Esophagus muscularis mucosa (tissue), 4 donors: ENCODE measurements at regions of chr5 and their contacts with region 1.

Region 1: DNA sequence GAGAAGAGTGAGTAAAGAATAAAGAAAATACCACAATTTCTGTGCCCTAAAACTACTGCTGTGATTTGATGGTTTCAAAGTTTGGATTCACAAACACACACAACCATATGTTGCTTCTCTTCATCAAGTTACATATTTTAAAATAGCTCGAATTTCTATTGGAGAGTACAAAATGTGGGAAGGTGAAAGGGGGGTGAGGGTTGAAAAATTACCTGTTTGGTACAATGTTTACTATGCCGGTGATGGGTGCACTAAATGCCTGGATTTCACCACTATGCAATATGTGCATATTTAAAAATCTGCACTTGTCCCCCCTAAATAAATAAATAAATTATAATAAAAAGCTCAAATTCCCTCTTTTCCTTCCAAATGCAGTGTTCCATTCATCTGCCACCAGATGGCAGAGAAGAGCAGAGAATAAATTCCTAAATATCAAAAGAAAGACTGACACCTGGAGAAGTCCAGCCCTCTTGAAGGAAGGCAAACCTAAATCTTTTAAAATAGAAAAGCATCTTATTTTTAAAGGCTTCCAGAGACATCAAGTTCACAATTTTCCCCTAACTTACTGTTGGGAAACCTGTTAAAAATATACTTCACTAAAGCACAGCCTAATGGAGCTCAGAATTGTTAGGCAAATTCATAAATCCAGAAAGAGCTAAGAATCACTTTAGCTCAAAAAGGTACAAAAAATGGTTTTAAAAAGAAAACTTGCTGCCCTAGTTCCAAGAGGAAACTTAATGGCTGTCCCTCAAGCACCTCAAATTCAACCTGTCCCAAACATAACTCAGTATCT is 24.8 kb upstream of the HNRNPA0 start:
- DNase-seq: no peak
- H3K4me3 ChIP-seq: no peak overlapping the region
- H3K27ac ChIP-seq: no peak overlapping the region
- H3K4me1 ChIP-seq: no peaks in the 10 kb centered on the region
- H3K27me3 ChIP-seq: no peaks in the 10 kb centered on the region
- CTCF ChIP-seq: peak; percentile 68 to 80 (median 79)
- EP300 ChIP-seq: no peak
- POLR2A ChIP-seq: no peak

Region 2: DNA sequence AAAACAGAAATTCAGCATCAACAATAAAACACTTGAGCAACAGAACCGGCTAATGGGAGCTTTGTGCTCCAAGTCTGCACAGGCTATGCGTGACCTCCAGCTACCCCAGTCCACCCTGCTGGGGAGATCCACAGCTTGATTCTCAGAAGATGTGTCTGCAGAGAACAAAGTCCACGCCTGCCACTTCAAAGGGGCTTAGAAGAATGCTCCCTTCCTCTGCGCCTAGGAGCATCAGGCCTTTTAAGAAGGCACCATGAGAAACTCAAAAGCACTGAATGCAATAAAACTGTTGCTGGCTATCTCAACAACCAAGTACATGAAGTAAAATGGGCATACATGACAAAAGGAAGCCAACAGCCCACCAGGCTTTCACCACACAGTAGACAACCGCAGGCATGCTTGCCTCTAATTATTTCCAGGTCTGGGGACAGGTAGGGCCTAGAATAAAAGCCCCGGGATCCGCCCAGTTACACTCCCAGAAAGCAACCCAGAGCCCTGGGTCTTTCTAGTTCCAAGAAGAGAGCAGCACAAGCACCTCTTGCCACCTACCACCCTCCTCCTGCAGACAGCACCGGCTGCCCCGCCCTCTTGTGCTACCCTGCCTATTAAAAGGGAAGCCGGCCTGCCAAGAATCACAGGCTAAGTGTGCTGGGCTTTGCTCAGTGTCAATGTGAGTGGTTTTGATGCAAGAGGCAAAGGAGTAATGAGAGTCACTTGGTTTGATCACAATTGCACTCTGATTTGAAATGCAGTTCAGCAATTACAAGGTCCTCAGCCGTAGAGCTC is 403.0 kb before region 1 on chr5:
- intact Hi-C with region 1: no loop called
- DNase-seq: no peak
- H3K4me3 ChIP-seq: no peak overlapping the region
- H3K27ac ChIP-seq: no peak overlapping the region
- H3K4me1 ChIP-seq: no peaks in the 10 kb centered on the region
- H3K27me3 ChIP-seq: no peaks in the 10 kb centered on the region
- CTCF ChIP-seq: no peak
- EP300 ChIP-seq: no peak
- POLR2A ChIP-seq: no peak

Region 3: DNA sequence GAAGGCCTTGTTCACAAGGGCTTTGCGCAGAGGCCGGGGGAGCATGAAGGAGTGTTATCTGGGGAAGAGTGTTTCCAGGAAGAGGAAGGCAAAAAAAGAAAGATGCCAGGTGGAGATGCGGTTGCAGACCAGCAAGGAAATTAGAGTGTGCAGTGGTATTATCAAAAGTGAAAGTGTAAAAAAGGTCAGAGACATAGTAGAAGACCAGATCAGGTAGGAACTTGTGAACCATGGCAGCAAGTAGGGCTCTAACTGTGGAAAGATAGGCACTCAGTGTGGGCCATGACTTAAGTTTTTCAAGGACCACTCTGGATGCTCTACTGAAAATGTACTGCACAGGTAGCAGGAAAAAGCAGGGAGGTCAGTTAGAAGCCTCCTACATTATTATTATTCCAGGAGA is 189.8 kb before region 1 on chr5:
- intact Hi-C with region 1: no loop called
- DNase-seq: no peak
- H3K4me3 ChIP-seq: no peak overlapping the region
- H3K27ac ChIP-seq: no peak overlapping the region
- H3K4me1 ChIP-seq: no peaks in the 10 kb centered on the region
- H3K27me3 ChIP-seq: peaks cover 0 to 29% (median 0%) of the 10 kb centered on the region in 4 donors
- CTCF ChIP-seq: no peak
- EP300 ChIP-seq: no peak
- POLR2A ChIP-seq: no peak

Region 4: GRCh38 chr5:137822158-137822764 is 43.3 kb after region 1 on chr5:
- intact Hi-C with region 1: loop called (anchors 1 kb)
- DNase-seq: no peak
- H3K4me3 ChIP-seq: no peak overlapping the region
- H3K27ac ChIP-seq: no peak overlapping the region
- H3K4me1 ChIP-seq: peaks cover 0 to 4% (median 0%) of the 10 kb centered on the region in 4 donors
- H3K27me3 ChIP-seq: no peaks in the 10 kb centered on the region
- CTCF ChIP-seq: peak; percentile 46 to 62 (median 52)
- EP300 ChIP-seq: no peak
- POLR2A ChIP-seq: no peak

Region 5: GRCh38 chr5:138138949-138139780 is 360.2 kb after region 1 on chr5 and contains the start of gene NME5:
- intact Hi-C with region 1: loop called (anchors 10 kb)
- DNase-seq: no peak
- H3K4me3 ChIP-seq: peak within 1 kb of the TSS; percentile 61 to 73 (median 64)
- H3K27ac ChIP-seq: no peak within 1 kb of the TSS
- H3K4me1 ChIP-seq: peaks cover 4 to 19% (median 9%) of the 10 kb centered on the region in 4 donors
- H3K27me3 ChIP-seq: no peaks in the 10 kb centered on the region
- CTCF ChIP-seq: no peak
- EP300 ChIP-seq: no peak
- POLR2A ChIP-seq: no peak
- total RNA-seq, gene NME5: 1.1 to 5.4 (median 2.5) TPM